AG04450 (cell line): ENCODE measurements at regions of chr6 and their contacts with region 1.

Region 1: DNA sequence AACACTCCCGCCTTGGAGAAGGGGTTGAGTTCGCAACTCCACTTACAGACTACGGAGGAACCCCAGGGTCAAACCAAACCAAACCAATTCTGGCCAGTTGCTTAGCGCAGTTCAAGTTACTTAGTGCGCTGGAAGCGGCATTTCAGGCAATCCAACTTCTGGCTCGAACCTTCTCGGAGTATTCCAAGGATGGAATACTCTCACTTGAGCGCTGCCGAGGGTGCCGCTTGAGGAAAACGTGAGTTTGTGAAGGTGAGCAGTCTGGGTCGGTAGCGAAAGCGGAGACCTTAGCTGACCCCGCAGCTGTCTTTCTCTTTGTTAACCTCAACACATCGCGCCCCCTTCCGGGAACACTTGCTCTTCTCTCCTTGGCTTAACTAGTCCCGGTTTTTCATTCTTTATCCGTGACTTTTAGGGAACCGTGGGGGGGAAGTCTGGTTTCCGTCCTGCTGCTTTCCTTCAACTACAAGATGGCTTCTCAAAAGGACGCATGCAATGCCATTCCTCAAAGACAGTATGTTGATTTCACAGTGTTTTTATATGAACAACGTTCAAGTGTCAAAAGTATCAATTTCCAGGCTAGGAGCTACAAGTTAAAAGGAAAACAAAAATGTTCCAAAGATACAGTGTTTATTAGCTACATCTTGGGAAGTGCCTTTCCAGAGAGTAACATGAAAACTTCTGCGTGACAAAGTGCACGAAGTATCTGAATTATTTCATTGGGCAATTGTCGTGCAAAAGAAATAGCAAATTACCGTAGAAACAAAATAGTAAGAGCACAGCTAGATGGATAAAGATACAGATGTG is 742 bp upstream of the PNISR start:
- DNase-seq: peak; percentile 49
- H3K4me3 ChIP-seq: peak overlapping the region; percentile 93
- H3K27ac ChIP-seq: peak overlapping the region; percentile 99
- H3K27me3 ChIP-seq: no peaks in the 10 kb centered on the region
- CTCF ChIP-seq: peak; percentile 66

Region 2: DNA sequence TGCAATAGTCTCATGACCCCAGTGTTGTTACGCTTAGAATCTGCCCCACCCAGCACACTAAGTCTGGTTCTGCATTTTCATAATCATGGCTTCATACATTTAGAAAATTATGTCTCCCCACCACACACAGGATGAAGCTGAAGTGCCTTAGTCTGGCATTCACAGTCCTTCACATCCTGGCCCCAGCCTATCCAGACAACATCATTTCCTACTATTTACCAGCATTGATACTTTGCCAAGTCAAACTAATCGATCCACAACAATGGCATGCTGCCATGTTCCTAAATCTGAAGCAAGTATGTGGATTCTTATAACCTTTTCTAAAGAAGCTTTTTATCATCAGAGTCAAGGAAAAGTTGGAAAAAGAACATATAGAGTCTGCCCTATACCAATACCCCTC is 345.7 kb before region 1 on chr6:
- CTCF ChIA-PET with region 1: no interaction called
- POLR2A ChIA-PET with region 1: no interaction called
- DNase-seq: no peak
- H3K4me3 ChIP-seq: no peak overlapping the region
- H3K27ac ChIP-seq: no peak overlapping the region
- H3K27me3 ChIP-seq: no peaks in the 10 kb centered on the region
- CTCF ChIP-seq: no peak

Region 3: DNA sequence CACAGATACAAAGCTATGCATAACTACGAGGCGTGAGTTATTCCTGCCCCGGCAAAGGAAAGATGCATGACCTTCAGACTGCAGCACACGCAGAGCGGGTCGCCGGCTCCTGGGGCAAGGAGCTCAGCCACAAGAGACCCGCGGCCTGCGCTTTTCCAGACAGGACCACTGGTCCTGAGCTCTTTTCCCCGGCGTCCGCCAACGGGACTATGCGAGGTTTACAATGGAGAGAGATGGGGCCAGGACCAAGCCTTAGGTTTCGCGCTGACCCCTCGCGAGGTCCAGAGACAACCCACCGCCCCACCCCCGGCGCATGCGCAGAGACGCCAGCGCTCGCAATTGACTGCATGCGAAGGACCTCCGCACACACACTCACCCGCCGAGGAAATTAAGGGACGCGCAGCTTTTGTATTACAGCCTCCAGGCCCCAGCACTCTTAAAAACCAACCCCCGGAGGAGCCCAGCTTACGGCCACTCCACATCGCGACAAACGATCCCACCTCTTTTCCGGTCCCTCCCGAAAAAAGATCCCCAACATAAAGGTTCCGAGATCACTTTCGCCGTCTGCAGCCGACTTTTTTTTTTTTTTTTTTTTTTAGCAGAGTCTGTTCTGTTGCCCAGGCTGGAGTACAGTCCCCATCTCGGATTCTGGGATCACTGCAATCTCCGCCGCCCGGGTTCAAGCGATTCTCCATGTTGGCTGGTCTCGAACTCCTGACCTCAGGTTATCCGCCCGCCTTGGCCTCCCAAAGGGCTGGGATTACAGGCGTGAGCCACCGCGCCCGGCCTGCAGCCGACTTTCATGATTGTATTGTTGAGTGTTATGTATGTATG is 31.9 kb before region 1 on chr6 and contains the start of gene COQ3:
- CTCF ChIA-PET with region 1: interaction called, 8 read pairs
- POLR2A ChIA-PET with region 1: interaction called, 28 read pairs
- DNase-seq: peak; percentile 60
- H3K4me3 ChIP-seq: peak within 1 kb of the TSS; percentile 85
- H3K27ac ChIP-seq: peak within 1 kb of the TSS; percentile 82
- H3K27me3 ChIP-seq: no peaks in the 10 kb centered on the region
- CTCF ChIP-seq: no peak
- polyA plus RNA-seq, gene COQ3: 8.5 and 11.0 TPM in 2 replicates

Region 4: GRCh38 chr6:100353276-100354015 is 927.6 kb after region 1 on chr6:
- CTCF ChIA-PET with region 1: no interaction called
- POLR2A ChIA-PET with region 1: no interaction called
- DNase-seq: no peak
- H3K4me3 ChIP-seq: no peak overlapping the region
- H3K27ac ChIP-seq: no peak overlapping the region
- H3K27me3 ChIP-seq: no peaks in the 10 kb centered on the region
- CTCF ChIP-seq: no peak